Endothelial cell of umbilical vein (primary cell): ENCODE measurements at regions of chr4 and their contacts with region 1.

Region 1: DNA sequence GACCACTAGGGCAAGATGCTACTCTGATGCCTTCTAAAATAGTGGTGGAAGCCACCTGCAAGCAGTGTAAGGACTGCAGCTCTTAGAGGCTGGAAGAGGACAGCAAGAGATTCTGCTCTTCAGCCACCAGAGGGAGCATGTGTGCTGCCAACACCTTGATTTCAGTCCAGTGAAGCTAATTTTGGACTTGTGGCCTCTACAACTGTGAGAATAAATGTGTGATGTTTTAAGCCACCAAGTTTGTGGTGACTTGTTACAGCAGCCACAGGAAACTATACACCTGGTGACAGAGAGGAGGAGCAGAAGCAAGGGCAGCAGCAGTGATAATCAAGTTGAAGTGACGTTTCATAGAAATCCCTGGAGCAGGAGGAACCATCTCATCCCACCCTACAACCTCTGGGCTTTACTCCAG is 55.9 kb downstream of the FGFBP1 start:
- DNase-seq: peak; percentile 72
- H3K4me3 ChIP-seq: no peak overlapping the region
- H3K27ac ChIP-seq: no peak overlapping the region
- H3K4me1 ChIP-seq: no peaks in the 10 kb centered on the region
- H3K27me3 ChIP-seq: no peaks in the 10 kb centered on the region
- CTCF ChIP-seq: peak; percentile 74 to 90
- POLR2A ChIP-seq: no peak

Region 2: DNA sequence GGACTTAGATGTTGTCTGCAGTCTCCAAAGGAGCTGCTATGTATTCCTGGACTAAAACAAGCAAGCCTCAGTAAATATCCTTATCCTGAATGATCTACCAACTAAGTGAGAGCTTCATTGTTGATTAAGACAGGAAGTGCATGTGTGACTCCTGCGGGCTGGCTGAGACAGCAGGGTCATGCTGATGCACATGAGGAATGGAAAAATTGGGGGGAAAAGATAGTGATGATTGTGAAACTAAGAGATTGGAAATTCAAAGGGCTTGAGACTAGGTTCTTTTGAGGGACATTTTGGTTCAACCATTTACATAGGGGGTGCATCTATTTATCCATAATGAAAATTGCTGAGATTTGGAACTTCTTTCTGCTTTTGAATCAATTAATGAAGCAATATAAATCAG is 516.0 kb before region 1 on chr4:
- CTCF ChIA-PET with region 1: no interaction called
- POLR2A ChIA-PET with region 1: no interaction called
- dilution Hi-C with region 1: no loop called
- intact Hi-C with region 1: no loop called
- DNase-seq: no peak
- H3K4me3 ChIP-seq: no peak overlapping the region
- H3K27ac ChIP-seq: no peak overlapping the region
- H3K4me1 ChIP-seq: no peaks in the 10 kb centered on the region
- H3K27me3 ChIP-seq: no peaks in the 10 kb centered on the region
- CTCF ChIP-seq: no peak
- POLR2A ChIP-seq: no peak

Region 3: DNA sequence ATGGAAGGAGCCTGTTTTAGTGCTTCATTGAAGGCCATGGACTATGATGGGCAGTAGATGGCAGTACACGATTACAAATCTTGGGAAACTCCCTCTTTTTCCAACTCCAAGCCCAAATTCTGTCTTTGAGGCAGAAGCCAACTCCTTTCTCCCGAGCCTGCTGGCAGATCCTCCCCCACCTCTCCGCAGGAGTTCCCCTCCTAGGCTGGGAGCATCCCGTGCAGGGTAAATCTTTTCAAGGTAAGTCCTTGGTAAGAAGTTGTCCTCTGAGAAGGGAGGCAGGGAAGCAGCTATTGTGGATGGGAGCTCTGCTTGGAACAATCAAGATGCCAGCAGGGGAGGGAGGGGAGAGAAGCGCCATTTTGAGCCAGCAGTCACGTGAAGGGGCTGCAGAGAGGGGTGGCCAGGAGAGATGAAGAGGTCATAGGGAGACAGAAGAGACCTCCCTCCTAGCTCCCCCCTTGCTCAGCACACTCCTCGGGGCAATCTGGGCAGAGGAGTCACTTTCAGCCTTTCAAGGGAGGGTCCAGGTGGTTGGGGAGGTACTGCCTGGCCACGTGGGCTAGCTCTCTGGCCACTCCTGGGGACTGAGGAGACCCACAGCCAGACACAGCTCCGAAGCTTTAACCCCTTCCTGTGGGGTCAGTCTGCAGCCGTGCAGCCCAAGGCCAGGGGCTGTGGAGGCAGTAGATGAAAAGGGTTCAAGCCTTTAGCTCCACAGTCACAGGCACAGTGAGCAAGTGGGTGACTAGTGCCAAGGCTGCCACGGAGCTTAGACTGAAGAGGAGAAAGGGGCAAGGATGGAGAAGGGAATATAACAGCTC is 403.4 kb before region 1 on chr4:
- CTCF ChIA-PET with region 1: interaction called, 67 read pairs
- POLR2A ChIA-PET with region 1: no interaction called
- dilution Hi-C with region 1: no loop called
- intact Hi-C with region 1: loop called (anchors 1 kb)
- DNase-seq: peak; percentile 89
- H3K4me3 ChIP-seq: peak overlapping the region; percentile 24 to 81 (median 44)
- H3K27ac ChIP-seq: peak overlapping the region; percentile 66
- H3K4me1 ChIP-seq: peaks cover 10% of the 10 kb centered on the region
- H3K27me3 ChIP-seq: no peaks in the 10 kb centered on the region
- CTCF ChIP-seq: peak; percentile 71 to 73
- POLR2A ChIP-seq: no peak

Region 4: DNA sequence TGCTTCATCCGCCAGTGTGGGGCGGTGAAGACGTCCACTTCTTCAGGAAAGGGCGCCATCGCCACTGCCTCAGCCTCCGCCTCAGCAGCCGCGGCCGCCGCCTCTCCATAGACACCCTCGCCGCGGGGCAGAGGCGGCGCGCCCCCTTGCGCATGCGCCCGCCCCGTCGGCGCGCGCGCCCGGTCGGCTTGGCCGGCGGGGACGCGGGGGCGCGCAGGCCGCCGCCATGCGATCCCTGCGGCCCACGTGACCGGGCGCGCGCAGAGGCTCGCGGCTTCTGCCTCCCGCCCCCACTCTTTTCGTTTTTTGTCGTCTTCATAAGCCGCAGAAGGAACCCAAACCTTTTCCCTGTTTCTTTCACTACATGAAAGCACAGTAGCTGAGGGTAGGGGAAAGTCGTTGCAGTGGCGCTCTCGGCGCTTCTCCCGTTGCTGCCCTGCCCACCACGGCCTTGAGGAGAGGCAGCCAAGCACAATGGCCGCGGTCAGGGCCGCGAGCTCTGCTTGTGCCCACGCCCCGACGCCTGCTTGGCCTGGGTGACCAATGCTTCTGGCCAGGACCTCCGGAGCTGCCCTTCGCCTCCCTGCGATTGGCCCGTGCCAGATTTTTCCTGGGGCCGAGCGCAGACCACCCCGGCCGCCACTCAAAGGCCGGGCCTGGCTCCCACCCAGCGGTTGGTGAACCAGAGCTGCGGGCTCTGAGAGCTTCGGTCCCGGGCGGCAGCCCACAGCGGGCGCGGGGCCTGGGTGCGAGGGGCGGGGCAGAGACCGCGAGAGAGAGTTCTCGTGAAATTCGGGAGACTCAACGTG is 227.2 kb before region 1 on chr4 and contains the start of gene FBXL5:
- CTCF ChIA-PET with region 1: no interaction called
- POLR2A ChIA-PET with region 1: no interaction called
- dilution Hi-C with region 1: no loop called
- intact Hi-C with region 1: no loop called
- DNase-seq: peak; percentile 86
- H3K4me3 ChIP-seq: peak within 1 kb of the TSS; percentile 78 to 97 (median 91)
- H3K27ac ChIP-seq: peak within 1 kb of the TSS; percentile 98
- H3K4me1 ChIP-seq: peaks cover 29% of the 10 kb centered on the region
- H3K27me3 ChIP-seq: no peaks in the 10 kb centered on the region
- CTCF ChIP-seq: no peak
- POLR2A ChIP-seq: peak; percentile 92
- total RNA-seq, gene FBXL5: 60.2 and 64.8 TPM in 2 replicates

Region 5: GRCh38 chr4:15677507-15677988 is 205.1 kb before region 1 on chr4:
- CTCF ChIA-PET with region 1: no interaction called
- POLR2A ChIA-PET with region 1: no interaction called
- dilution Hi-C with region 1: no loop called
- intact Hi-C with region 1: no loop called
- DNase-seq: peak; percentile 43
- H3K4me3 ChIP-seq: no peak overlapping the region
- H3K27ac ChIP-seq: no peak overlapping the region
- H3K4me1 ChIP-seq: peaks cover 32% of the 10 kb centered on the region
- H3K27me3 ChIP-seq: no peaks in the 10 kb centered on the region
- CTCF ChIP-seq: no peak
- POLR2A ChIP-seq: no peak

Region 6: DNA sequence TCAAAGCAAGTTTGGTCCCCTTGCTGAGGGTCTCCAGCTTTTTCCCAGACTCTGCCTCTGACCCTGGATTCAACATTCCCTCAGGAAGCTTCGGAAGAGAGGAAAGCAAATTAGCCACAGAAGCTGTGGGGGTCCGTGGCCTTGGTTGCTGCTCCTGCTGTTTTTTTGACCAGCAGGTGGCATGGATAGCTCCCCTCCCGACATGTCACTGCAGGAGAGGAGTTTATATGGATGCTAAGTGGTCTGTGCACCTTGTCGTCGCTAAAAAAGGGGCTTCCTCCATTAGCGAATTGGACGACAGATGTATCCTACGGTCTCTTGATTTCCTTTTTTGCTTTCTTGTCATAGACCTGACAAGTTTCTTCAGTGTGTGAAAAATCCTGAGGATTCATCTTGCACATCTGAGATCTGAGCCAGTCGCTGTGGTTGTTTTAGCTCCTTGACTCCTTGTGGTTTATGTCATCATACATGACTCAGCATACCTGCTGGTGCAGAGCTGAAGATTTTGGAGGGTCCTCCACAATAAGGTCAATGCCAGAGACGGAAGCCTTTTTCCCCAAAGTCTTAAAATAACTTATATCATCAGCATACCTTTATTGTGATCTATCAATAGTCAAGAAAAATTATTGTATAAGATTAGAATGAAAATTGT is 34.4 kb before region 1 on chr4:
- CTCF ChIA-PET with region 1: interaction called, 12 read pairs
- POLR2A ChIA-PET with region 1: no interaction called
- dilution Hi-C with region 1: no loop called
- intact Hi-C with region 1: no loop called
- DNase-seq: no peak
- H3K4me3 ChIP-seq: no peak overlapping the region
- H3K27ac ChIP-seq: no peak overlapping the region
- H3K4me1 ChIP-seq: no peaks in the 10 kb centered on the region
- H3K27me3 ChIP-seq: no peaks in the 10 kb centered on the region
- CTCF ChIP-seq: no peak
- POLR2A ChIP-seq: no peak

Region 7: DNA sequence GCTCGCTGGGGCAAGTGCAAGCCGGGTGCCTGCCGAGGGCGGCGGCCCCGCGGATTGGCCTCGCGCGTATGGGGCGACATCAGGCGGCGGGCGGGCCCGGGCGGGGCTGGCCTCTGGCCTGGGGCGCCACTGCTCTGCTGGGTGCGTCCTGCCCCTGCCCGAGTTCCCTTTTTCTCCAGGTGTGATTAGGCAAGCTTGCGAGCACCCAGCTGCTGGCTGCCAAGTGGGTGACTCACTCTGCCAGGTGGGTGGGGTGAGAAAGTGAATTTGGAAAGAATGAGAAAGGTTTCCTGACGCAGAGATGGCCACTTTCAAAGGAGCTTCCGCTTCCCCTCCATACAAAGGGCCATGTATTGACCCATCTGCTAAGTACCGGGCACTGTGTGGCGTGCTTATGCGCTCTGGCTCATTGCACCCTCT is 23.4 kb after region 1 on chr4:
- CTCF ChIA-PET with region 1: interaction called, 19 read pairs
- POLR2A ChIA-PET with region 1: no interaction called
- dilution Hi-C with region 1: no loop called
- intact Hi-C with region 1: no loop called
- DNase-seq: no peak
- H3K4me3 ChIP-seq: no peak overlapping the region
- H3K27ac ChIP-seq: no peak overlapping the region
- H3K4me1 ChIP-seq: no peaks in the 10 kb centered on the region
- H3K27me3 ChIP-seq: no peaks in the 10 kb centered on the region
- CTCF ChIP-seq: no peak
- POLR2A ChIP-seq: no peak

Region 8: GRCh38 chr4:15926486-15926885 is 43.8 kb after region 1 on chr4:
- CTCF ChIA-PET with region 1: interaction called, 18 read pairs
- POLR2A ChIA-PET with region 1: no interaction called
- dilution Hi-C with region 1: no loop called
- intact Hi-C with region 1: loop called (anchors 2 kb)
- DNase-seq: no peak
- H3K4me3 ChIP-seq: no peak overlapping the region
- H3K27ac ChIP-seq: no peak overlapping the region
- H3K4me1 ChIP-seq: peaks cover 3% of the 10 kb centered on the region
- H3K27me3 ChIP-seq: peaks cover 2 to 5% of the 10 kb centered on the region in 2 experiments
- CTCF ChIP-seq: no peak
- POLR2A ChIP-seq: no peak

Region 9: DNA sequence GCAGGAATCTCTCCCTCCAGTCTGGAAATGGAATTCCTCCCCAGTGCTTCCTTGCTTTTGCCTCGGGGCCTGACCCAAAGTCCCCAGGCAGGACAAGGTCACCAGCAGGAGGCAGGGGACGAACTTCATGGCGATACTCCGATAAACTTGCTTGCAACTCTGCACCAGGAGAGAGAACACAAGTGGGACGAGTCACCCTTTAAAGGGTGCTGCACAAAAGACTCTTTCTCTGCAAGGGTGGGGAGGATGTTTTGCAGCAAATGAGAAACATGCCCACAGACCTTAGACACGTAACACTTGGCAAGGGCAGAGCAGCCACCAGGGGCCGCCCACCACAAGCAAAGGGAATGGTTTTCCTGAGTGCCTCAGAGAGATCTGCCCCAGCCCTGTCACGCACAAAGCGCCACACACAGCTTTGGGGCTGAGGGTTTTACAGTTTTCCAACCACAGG is 80.3 kb after region 1 on chr4 and contains the start of gene FGFBP2:
- CTCF ChIA-PET with region 1: interaction called, 30 read pairs
- POLR2A ChIA-PET with region 1: no interaction called
- dilution Hi-C with region 1: no loop called
- intact Hi-C with region 1: no loop called
- DNase-seq: peak; percentile 34
- H3K4me3 ChIP-seq: no peak within 1 kb of the TSS
- H3K27ac ChIP-seq: no peak within 1 kb of the TSS
- H3K4me1 ChIP-seq: no peaks in the 10 kb centered on the region
- H3K27me3 ChIP-seq: no peaks in the 10 kb centered on the region
- CTCF ChIP-seq: peak; percentile 22 to 67
- POLR2A ChIP-seq: no peak
- total RNA-seq, gene FGFBP2: not detected in 2 replicates

Region 10: DNA sequence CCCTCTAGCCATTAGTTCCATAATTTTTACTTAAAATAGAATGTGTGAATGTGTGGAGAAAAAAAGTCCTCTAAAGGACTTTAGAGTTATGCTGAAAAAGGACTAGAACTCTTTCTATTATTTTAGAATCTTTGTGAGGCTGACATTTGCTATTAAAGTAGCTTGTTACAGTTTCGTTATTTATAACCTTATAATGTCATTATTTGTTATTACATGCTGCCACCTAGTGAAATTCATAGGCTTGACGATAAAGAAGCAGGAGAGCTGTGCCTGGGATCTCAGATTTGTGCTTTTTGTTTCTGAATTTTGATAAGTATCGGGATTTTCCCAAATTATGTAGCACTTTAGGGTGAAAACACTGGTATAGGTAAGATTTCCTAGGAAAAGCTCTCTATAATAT is 382.1 kb after region 1 on chr4:
- CTCF ChIA-PET with region 1: interaction called, 61 read pairs
- POLR2A ChIA-PET with region 1: no interaction called
- dilution Hi-C with region 1: no loop called
- intact Hi-C with region 1: loop called (anchors 1 kb)
- DNase-seq: peak; percentile 58
- H3K4me3 ChIP-seq: no peak overlapping the region
- H3K27ac ChIP-seq: no peak overlapping the region
- H3K4me1 ChIP-seq: no peaks in the 10 kb centered on the region
- H3K27me3 ChIP-seq: peaks cover 0 to 9% of the 10 kb centered on the region in 2 experiments
- CTCF ChIP-seq: peak; percentile 20 to 21
- POLR2A ChIP-seq: no peak